ENCODE measurements at regions of chr17 and their contacts with region 1.

Region 1: GRCh38 chr17:1628856-1629646 is 417 bp upstream of the SLC43A2 start:
- DNase-seq: peak; percentile 92 to 96 (median 95)
- ATAC-seq: peak; percentile 86
- H3K4me3 ChIP-seq: peak overlapping the region; percentile 78 to 94
- H3K27ac ChIP-seq: peak overlapping the region; percentile 95
- H3K4me1 ChIP-seq: peaks cover 26 to 66% of the 10 kb centered on the region in 2 donors
- H3K27me3 ChIP-seq: no peaks in the 10 kb centered on the region
- CTCF ChIP-seq: peak; percentile 20 to 44

Region 2: GRCh38 chr17:1455797-1456599 is 173.1 kb before region 1 on chr17 and contains the start of gene CRK:
- intact Hi-C with region 1: loop called in 1 of 2 experiments (anchors 10 kb)
- DNase-seq: peak; percentile 96 to 100 (median 98)
- ATAC-seq: peak; percentile 95
- H3K4me3 ChIP-seq: peak within 1 kb of the TSS; percentile 93 to 100
- H3K27ac ChIP-seq: peak within 1 kb of the TSS; percentile 95 to 98
- H3K4me1 ChIP-seq: peaks cover 36 to 63% of the 10 kb centered on the region in 2 donors
- H3K27me3 ChIP-seq: peaks cover 0 to 9% of the 10 kb centered on the region in 2 donors
- CTCF ChIP-seq: peak in 1 of 2 donors; percentile 13
- polyA plus RNA-seq, gene CRK: 51.0 to 61.3 (median 54.4) TPM

Region 3: DNA sequence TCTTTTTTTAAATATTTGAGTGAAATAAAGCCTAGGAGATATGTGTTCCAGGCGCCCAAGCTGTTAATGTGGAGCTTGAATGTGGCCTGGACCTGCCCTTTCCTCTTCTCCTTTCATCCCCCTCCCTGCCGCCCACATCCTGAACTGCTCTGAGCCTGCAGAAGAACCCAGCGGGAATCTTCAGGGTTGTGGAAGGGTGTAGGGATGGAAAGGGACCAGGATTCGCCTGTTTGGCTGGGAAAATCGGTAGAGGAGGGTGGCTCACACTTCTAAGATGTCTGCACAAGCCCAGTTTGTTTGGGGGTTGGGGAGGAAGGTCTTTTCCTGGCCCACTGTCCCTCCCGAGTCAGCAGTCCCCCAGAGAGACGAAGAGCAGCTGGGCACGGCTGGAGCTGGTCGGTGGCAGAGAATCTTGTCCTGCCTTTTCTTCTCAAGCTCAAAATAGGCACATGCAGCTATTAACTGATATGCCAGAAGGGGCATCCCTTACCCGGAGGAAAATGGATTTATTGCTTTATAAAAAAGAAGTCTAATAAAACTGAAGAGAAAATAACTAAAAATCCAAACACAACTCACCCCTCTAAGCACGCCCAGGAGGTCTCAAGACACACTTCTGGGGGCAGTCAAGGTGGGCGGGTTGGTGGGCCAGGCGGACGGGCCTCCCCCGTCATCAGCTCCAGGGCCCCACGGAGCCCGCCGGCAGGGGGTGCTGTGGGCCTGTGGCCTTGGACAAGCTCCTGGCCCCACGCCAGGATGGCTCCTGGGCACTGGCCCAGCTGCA is 54.9 kb before region 1 on chr17:
- intact Hi-C with region 1: loop called (anchors 2 to 10 kb)
- DNase-seq: peak; percentile 83 to 98 (median 88)
- ATAC-seq: peak; percentile 59
- H3K4me3 ChIP-seq: no peak overlapping the region
- H3K27ac ChIP-seq: peak overlapping the region; percentile 54 to 98
- H3K4me1 ChIP-seq: peaks cover 38 to 61% of the 10 kb centered on the region in 2 donors
- H3K27me3 ChIP-seq: no peaks in the 10 kb centered on the region
- CTCF ChIP-seq: peak; percentile 96 to 97

Region 4: DNA sequence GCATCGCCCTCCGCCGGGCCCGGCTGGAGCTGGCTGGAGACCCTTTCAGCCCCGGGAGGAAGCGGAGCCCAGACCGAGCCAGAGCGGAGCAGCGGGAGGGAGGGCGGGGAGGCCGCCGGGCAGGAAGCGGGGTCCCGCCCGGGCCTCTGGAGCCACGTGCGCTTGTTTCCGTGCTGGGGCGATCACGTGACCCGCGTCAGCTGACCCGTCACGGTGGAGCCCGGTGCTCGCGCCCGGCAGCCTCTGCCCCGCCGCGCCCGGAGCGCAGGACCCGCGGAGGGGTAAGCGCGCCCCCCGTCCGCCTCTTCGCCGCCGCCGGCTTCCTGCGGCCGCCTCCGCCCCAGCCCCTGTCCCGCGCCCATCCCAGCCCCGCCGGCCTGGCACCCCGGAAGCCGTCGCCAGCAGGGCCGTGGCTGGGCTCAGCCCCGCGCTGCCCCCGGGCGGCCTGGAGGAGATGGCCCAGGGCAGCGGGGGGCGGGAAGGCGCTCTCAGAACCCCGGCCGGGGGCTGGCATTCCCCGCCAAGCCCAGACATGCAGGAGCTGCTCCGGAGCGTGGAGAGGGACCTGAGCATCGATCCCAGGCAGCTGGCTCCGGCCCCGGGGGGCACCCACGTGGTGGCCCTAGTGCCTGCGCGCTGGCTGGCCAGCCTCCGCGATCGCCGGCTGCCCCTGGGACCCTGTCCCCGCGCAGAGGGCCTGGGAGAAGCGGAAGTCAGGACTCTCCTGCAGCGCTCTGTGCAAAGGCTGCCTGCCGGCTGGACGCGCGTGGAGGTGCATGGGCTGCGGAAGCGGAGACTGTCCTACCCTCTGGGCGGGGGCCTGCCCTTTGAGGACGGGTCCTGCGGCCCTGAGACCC is 95.7 kb after region 1 on chr17 and contains the start of gene WDR81:
- intact Hi-C with region 1: no loop called
- DNase-seq: peak; percentile 82 to 99 (median 93)
- ATAC-seq: peak; percentile 85
- H3K4me3 ChIP-seq: peak within 1 kb of the TSS; percentile 67 to 94
- H3K27ac ChIP-seq: peak within 1 kb of the TSS; percentile 85 to 88
- H3K4me1 ChIP-seq: peaks cover 16 to 90% of the 10 kb centered on the region in 2 donors
- H3K27me3 ChIP-seq: no peaks in the 10 kb centered on the region
- CTCF ChIP-seq: no peak
- polyA plus RNA-seq, gene WDR81: 9.3 to 13.5 (median 11.0) TPM

Region 5: DNA sequence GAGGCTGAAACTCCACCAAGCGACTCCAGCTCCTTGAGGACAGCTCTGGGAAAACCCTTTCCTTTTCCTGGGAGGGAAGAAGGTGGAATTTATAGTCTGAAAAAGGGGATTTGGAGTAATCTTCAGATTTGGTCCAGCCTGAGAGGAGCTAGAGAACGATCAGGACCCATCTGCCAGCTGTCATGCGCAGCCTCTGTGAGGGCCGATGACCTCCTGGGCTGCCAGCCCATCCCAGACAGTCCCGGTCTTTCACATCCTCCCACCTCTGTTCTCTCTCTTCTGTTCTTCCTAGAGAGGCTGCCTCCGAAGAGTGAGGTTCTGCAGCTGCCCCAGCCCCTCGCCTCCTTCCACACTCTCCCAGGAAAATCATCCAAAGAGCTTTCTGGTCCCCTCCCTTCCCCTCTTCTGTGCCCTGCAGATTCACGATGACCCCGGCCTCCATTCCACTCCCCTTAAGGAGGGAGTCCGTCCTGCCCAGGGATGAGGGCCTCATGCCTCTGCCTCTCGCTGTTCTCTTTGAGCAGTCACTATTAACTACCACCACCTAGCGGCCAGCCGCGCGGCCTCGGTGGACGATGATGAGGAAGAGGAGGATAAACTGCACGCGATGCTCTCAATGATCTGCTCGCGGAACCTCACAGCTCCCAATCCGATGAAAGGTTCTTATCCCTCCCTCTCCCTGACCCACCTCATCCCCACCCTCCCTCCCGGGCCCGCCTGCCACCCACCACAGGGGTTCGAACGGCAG is 737.9 kb after region 1 on chr17:
- intact Hi-C with region 1: no loop called
- DNase-seq: no peak
- ATAC-seq: no peak
- H3K4me3 ChIP-seq: no peak overlapping the region
- H3K27ac ChIP-seq: no peak overlapping the region
- H3K4me1 ChIP-seq: peaks cover 0 to 7% of the 10 kb centered on the region in 2 donors
- H3K27me3 ChIP-seq: no peaks in the 10 kb centered on the region
- CTCF ChIP-seq: no peak

Measured in left lung (tissue), 14 donors.